ENCODE measurements at regions of chr13 and their contacts with region 1.

Region 1: DNA sequence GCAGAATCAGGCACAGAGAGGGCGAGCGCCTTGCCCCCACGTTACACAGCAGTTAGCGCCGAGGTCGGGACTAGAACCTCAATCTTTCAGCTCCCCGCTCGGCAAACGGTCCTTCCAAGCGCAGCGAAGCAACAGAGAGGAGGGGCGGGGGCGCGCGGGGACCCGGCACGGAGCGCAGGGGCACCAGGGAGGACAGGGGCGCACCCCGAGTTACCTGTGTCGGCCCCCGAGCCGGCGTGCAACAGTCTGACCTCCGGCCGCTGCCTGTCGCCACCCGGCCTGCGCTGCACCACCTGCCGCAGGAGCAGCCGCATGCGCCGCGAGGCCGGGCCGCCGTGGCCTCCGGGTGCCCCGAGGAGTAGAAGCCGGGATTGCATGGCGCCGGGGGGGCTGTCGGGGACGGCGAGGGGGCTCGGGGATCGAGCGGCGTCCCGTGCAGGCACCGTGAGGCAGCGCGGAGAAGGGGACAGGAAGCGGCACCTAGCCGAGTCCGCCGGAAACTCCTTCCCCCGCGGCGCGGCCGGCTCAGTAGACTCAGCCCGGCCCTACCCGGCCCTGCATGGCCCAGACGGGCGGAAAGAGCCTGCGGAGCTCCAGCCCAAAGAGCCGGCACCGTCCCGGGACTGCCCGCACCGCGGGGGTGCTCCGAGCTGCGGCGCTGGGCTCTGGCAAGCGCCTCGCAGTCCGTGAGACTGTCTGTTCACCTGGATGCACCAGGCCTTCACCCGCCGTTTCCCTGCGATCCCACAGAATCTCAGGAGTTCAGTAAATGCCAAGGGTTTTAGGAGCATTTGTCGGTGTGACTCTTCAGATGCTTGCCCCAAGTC is at the start of gene VWA8:
- DNase-seq: peak; percentile 81 to 87 (median 84)
- ATAC-seq: peak; percentile 94
- H3K4me3 ChIP-seq: peak within 1 kb of the TSS; percentile 82
- H3K27ac ChIP-seq: peak within 1 kb of the TSS; percentile 78 to 88 (median 83)
- H3K4me1 ChIP-seq: peaks cover 27% of the 10 kb centered on the region
- H3K27me3 ChIP-seq: no peaks in the 10 kb centered on the region
- CTCF ChIP-seq: peak in 1 of 7 experiments; percentile 4
- POLR2A ChIP-seq: peak; percentile 38 to 75 (median 59)
- total RNA-seq, gene VWA8: 15.8 to 29.3 TPM

Region 2: GRCh38 chr13:42039946-42040729 is 79.3 kb after region 1 on chr13:
- intact Hi-C with region 1: loop called (anchors 10 kb)
- DNase-seq: peak; percentile 85 to 91 (median 86)
- ATAC-seq: peak; percentile 82
- H3K4me3 ChIP-seq: peak overlapping the region; percentile 74 to 78
- H3K27ac ChIP-seq: peak overlapping the region; percentile 59 to 95 (median 90)
- H3K4me1 ChIP-seq: peaks cover 22% of the 10 kb centered on the region
- H3K27me3 ChIP-seq: no peaks in the 10 kb centered on the region
- CTCF ChIP-seq: peak in 1 of 7 experiments; percentile 10
- POLR2A ChIP-seq: peak; percentile 71 to 79 (median 75)

Measured in body of pancreas (tissue), 4 donors.